ENCODE measurements at regions of chr3 and their contacts with region 1.

Region 1: DNA sequence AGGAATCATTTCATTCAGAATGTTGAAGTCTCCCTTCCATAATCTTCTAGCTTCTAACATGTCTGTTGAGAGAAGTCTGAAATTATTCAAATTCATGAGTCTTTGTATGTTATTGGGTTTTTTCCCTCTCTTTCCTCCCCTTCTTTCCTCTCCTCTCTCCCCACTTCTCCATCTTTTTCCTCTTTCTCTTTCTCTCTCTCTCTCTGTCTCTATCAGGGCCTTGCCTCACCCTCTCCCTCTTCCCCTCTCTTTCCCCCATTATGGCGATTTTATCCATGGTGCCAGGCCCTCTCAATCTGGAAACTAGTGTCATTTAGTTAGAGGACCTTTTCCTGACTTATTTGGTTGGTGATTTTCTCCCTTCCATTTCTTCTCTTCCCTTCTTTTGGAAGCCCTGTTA is 147.3 kb downstream of the SST start:
- DNase-seq: no peak
- CTCF ChIP-seq: no peak

Region 2: GRCh38 chr3:187507905-187508304 is 15.0 kb before region 1 on chr3:
- CTCF ChIA-PET with region 1: no interaction called
- POLR2A ChIA-PET with region 1: no interaction called
- DNase-seq: no peak
- CTCF ChIP-seq: no peak

Region 3: GRCh38 chr3:187550446-187550845 is 27.6 kb after region 1 on chr3:
- CTCF ChIA-PET with region 1: no interaction called
- POLR2A ChIA-PET with region 1: no interaction called
- DNase-seq: no peak
- CTCF ChIP-seq: no peak

Region 4: DNA sequence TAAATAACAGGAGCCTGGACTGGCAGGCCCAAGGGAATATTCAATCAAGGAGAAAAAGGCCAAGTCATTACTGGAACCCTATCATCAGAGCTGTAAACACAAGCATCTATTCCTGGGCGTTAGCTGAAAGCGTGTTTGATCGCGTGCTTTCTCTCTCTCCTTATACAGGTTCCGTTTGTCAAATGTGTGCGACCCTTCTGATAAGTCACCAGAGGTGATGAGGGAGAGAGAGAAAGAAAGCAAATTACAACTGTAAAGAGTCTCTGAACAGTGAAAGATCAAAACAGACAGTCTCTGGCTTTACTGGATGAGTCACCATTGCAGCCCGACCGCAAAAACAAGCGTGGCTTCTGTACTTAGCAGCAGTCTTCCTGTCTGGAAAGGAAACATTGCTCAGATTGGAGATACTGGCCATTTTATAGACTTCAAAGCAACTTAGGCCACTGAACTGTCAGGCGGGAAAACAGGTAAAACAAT is 1609.4 kb after region 1 on chr3:
- CTCF ChIA-PET with region 1: no interaction called
- POLR2A ChIA-PET with region 1: interaction called, 11 read pairs
- DNase-seq: peak; percentile 28
- CTCF ChIP-seq: no peak

Measured in GM10248 (cell line).